ENCODE measurements at regions of chr14 and their contacts with region 1.

Region 1: DNA sequence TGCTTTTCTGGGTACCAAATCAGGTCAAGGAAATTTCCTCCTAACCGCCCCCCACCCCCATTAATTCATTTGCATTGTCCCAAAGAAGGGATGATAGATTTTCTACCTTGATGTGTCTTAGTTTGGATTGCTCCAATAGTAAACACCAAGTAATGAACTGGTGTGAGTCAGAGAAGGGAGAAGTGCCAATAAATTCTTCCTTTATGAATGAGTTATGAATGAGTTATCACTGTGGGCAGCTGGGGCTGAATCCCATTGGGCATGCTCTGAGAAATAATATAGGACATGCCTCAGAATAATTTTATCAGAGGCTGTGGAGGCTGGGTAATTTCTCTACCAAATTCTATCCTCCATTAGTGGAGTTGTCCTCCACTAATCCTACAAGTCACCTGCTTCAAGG is 277.9 kb upstream of the FLRT2 start:
- DNase-seq: no peak
- ATAC-seq: no peak
- H3K4me3 Mint-ChIP-seq: no peak overlapping the region
- H3K27ac Mint-ChIP-seq: no peak overlapping the region
- H3K4me1 Mint-ChIP-seq: peaks cover 23% of the 10 kb centered on the region
- H3K27me3 Mint-ChIP-seq: no peaks in the 10 kb centered on the region
- CTCF ChIP-seq: no peak

Region 2: GRCh38 chr14:85280074-85280473 is 28.1 kb after region 1 on chr14:
- CTCF ChIA-PET with region 1: no interaction called
- POLR2A ChIA-PET with region 1: no interaction called
- DNase-seq: no peak
- ATAC-seq: no peak
- H3K4me3 Mint-ChIP-seq: no peak overlapping the region
- H3K27ac Mint-ChIP-seq: 0 out of 2 replicates have a peak overlapping the region, but pooled peaks have one; percentile 6
- H3K4me1 Mint-ChIP-seq: peaks cover 6% of the 10 kb centered on the region; the same call in 1 of the 2 replicates
- H3K27me3 Mint-ChIP-seq: no peaks in the 10 kb centered on the region
- CTCF ChIP-seq: no peak

Region 3: DNA sequence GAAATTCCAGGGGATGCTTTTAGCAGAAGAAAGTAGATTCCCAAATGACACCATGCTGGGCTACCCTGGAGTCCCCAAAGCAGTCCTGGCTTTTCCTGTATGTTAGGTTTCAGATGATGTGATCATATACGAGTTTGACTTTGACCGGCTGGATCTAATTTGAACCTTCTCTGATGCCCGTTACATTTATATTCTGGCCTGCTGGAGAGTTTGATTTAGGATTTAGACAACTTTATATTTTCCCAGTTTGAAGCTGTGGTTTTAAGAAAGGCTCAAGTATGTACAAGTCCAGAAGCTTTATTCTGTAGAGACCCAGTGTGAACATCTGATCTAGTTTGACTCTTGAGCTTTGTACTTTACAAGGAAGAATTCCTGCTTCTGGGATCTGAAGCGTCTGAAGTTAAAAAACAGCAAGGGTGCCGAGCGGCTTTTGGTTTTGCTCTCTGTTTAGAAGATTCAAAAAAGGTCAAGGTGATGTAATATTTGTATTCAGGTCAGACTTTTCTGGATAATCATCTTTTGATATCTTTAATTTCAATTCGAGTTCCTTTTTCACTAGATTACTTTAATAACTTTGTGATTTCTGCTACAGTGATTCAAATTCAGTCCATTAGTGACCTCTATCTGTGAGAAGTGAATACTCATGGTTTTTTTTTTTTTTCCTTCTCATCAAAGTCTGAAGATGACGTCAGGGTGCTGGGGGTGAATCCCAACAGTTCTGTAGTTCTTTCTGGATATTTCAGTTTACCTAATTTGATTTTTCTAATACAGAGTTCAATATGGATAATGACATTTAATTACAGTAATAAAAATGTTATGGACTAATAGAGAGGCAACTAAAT is 284.2 kb after region 1 on chr14:
- CTCF ChIA-PET with region 1: no interaction called
- POLR2A ChIA-PET with region 1: interaction called, 10 read pairs
- DNase-seq: no peak
- ATAC-seq: no peak
- H3K4me3 Mint-ChIP-seq: peak overlapping the region; percentile 49
- H3K27ac Mint-ChIP-seq: no peak overlapping the region
- H3K4me1 Mint-ChIP-seq: peaks cover 75% of the 10 kb centered on the region
- H3K27me3 Mint-ChIP-seq: peaks cover 42% of the 10 kb centered on the region
- CTCF ChIP-seq: no peak

Measured in WTC11 (cell line).